Naive thymus-derived CD4-positive, alpha-beta T cell (primary cell): ENCODE measurements at regions of chr11 and their contacts with region 1.

Region 1: GRCh38 chr11:108135845-108136544 is 14.6 kb downstream of the ACAT1 start:
- DNase-seq: peak in 6 of 9 donors; percentile 11 to 38 (median 29)
- ATAC-seq: peak; percentile 54
- H3K4me3 ChIP-seq: no peak overlapping the region
- H3K4me3 Mint-ChIP-seq: no peak overlapping the region
- H3K27ac ChIP-seq: no peak overlapping the region
- H3K27ac Mint-ChIP-seq: peak overlapping the region in 6 of 9 donors; percentile 16 to 72 (median 43)
- H3K4me1 ChIP-seq: no peaks in the 10 kb centered on the region
- H3K4me1 Mint-ChIP-seq: peaks cover 0 to 20% (median 11%) of the 10 kb centered on the region in 7 donors
- H3K27me3 ChIP-seq: no peaks in the 10 kb centered on the region
- H3K27me3 Mint-ChIP-seq: no peaks in the 10 kb centered on the region

Region 2: GRCh38 chr11:108093128-108093904 is 42.7 kb before region 1 on chr11:
- CTCF ChIA-PET with region 1: no interaction called
- POLR2A ChIA-PET with region 1: no interaction called
- intact Hi-C with region 1: no loop called
- DNase-seq: no peak
- ATAC-seq: no peak
- H3K4me3 ChIP-seq: no peak overlapping the region
- H3K4me3 Mint-ChIP-seq: no peak overlapping the region
- H3K27ac ChIP-seq: no peak overlapping the region
- H3K27ac Mint-ChIP-seq: peak overlapping the region in 5 of 9 donors; percentile 33 to 72 (median 44)
- H3K4me1 ChIP-seq: no peaks in the 10 kb centered on the region
- H3K4me1 Mint-ChIP-seq: peaks cover 0 to 7% (median 0%) of the 10 kb centered on the region in 7 donors
- H3K27me3 ChIP-seq: no peaks in the 10 kb centered on the region
- H3K27me3 Mint-ChIP-seq: no peaks in the 10 kb centered on the region

Region 3: DNA sequence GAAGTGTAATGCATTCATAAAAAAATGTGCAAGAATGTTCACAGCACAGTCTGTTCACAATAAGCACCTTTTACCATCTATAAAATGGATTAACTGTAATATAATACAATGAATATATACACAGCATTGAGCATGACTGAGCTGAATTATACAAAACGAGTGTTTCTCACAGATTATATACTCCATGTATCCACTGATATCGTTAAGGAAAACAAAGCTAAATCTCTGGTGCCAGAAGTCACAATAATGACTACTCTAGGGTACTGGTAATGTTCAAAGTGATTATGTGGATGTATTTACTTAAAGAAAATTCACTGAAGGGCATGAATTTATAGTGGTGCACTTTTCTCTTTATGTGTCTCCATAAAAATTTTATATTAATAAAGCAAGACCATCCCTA is 18.6 kb after region 1 on chr11:
- CTCF ChIA-PET with region 1: no interaction called
- POLR2A ChIA-PET with region 1: no interaction called
- intact Hi-C with region 1: loop called in 1 of 2 experiments (anchors 2 kb)
- DNase-seq: no peak
- ATAC-seq: no peak
- H3K4me3 ChIP-seq: no peak overlapping the region
- H3K4me3 Mint-ChIP-seq: no peak overlapping the region
- H3K27ac ChIP-seq: no peak overlapping the region
- H3K27ac Mint-ChIP-seq: peak overlapping the region in 2 of 9 donors; percentile 58 to 65
- H3K4me1 ChIP-seq: no peaks in the 10 kb centered on the region
- H3K4me1 Mint-ChIP-seq: peaks cover 0 to 13% (median 0%) of the 10 kb centered on the region in 7 donors
- H3K27me3 ChIP-seq: no peaks in the 10 kb centered on the region
- H3K27me3 Mint-ChIP-seq: no peaks in the 10 kb centered on the region